Psoas muscle (tissue), 8 donors: ENCODE measurements at regions of chr2 and their contacts with region 1.

Region 1: DNA sequence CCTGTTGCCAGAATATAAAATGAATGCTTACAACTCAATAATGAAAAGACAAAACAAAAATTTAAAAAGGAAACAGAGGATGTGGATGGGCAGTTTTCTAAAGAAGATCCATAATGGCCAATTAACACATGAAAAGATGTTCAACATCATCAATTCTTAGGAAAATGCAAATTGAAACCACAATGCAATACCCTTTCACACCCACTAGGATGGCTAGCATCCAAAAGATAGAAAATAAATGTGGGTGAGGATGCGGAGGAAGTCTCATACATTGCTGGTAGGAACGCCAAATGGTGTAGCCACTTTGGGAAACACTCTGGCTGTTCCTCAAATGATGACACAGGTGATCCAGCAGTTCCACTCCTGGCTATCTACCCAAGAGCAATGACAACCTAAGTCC is 130.5 kb downstream of the TNS1 start:
- DNase-seq: no peak
- ATAC-seq: no peak
- H3K4me3 ChIP-seq: no peak overlapping the region
- H3K27ac ChIP-seq: peak overlapping the region; percentile 75
- H3K4me1 ChIP-seq: peaks cover 46% of the 10 kb centered on the region
- H3K27me3 ChIP-seq: no peaks in the 10 kb centered on the region
- CTCF ChIP-seq: no peak

Region 2: DNA sequence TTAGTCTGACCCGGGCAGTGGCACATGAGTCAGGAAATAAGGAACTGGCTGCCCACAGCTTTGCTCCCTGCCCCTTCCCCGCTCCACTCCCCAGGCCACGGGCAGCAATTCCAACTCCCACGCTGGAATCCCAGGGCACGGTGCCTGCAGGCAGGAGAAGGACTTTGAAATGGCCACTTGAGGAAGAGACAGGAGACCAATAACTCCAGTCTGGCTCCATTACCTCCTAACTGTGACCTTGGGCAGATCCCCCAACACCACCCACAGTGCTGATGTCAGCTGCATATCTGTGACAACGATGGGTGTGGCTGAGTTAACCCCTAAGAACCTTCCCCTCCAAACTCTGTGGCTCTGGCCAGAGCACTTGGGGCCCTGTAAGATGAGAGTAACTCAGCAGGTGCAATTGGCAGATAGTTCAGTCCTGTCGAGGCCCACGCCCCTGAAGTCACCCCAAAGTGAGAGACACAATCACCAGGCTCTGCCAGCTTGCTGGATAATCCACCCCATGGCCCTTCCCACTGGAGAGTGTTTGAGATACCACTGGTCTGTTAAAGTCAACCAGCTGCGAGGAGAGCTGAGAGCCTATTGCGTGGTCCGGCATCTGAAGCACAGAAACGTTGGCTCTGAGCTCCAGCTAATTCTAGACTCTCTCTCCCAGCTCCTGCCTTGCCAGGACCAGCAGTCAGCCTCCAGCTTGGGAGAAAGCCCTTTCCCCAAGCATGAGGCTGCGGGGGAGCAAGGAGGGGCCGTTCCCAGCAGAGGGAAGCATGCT is 44.7 kb before region 1 on chr2:
- intact Hi-C with region 1: loop called in 1 of 2 experiments (anchors 2 kb)
- DNase-seq: peak; percentile 70 to 77
- ATAC-seq: peak; percentile 49 to 60 (median 51)
- H3K4me3 ChIP-seq: no peak overlapping the region
- H3K27ac ChIP-seq: peak overlapping the region; percentile 89
- H3K4me1 ChIP-seq: peaks cover 83% of the 10 kb centered on the region
- H3K27me3 ChIP-seq: no peaks in the 10 kb centered on the region
- CTCF ChIP-seq: no peak

Region 3: GRCh38 chr2:217838409-217838831 is 33.9 kb before region 1 on chr2:
- intact Hi-C with region 1: no loop called
- DNase-seq: peak in 1 of 2 donors; percentile 60
- ATAC-seq: no peak
- H3K4me3 ChIP-seq: no peak overlapping the region
- H3K27ac ChIP-seq: peak overlapping the region; percentile 89
- H3K4me1 ChIP-seq: peaks cover 98% of the 10 kb centered on the region
- H3K27me3 ChIP-seq: no peaks in the 10 kb centered on the region
- CTCF ChIP-seq: no peak

Region 4: DNA sequence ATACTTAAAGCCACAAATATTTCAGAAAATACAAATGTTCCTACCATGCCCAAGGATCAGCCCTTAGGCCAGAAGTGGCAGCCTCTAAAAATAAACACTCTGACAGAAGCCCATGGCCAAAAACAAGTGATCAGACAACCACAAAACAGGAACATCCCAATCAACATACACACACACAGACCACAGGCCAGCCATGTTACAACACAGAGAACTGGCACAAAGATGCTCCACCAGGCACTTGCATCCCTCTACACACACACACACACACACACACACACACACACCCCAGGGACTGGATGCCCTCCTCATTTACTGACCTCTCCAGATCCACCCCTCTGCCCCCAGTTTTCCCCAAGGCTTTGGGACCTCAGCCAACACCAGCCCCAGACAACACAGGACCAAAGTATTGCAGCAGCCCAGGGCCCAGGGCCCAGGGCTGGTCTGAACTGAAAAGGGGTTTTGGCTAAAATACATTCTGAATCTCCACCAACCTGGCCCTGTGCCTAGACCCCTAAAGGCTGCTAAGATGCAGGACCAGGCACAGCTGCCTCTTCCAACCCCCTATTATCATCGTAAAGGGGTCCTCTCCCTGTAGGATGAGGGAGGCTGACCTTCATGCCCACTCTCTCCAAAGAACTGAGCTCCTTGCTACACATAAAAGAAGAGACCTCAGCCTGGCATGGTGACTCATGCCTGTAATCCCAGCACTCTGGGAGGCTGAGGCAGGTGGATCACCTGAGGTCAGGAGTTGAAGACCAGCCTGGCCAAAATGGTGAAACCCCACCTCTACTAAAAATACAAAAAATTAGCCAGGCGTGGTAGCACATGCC is 20.9 kb before region 1 on chr2:
- intact Hi-C with region 1: no loop called
- DNase-seq: peak; percentile 63 to 73
- ATAC-seq: peak; percentile 32 to 55 (median 46)
- H3K4me3 ChIP-seq: peak overlapping the region; percentile 66
- H3K27ac ChIP-seq: peak overlapping the region; percentile 89
- H3K4me1 ChIP-seq: peaks cover 96% of the 10 kb centered on the region
- H3K27me3 ChIP-seq: no peaks in the 10 kb centered on the region
- CTCF ChIP-seq: no peak

Region 5: DNA sequence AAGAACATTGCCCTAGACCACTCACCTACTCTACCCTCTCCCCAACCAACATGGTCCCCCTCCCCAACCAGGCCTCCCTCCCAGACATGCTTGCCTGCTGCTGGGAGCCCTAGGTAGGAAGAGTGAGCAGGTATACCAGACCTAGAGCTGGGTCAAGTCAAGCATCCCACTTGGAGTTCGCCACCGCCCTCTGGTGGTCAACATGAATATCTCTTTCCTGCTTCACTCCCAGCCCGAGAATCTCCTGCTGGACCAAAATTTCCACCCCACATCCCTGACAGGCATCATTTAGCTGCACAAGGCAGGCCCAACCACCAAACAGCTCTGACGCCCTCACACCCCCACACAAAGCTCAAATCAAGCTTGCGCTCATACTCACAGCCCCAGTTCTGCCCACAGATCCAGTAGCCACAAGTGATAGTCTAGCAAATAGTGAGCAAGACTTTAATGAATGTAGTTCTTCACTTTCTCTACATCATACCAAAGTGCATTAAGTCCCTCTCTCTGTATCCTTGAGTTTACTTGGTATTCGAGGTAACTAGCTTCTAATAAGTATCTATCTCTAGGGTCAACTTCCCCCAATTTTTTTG is 14.5 kb after region 1 on chr2:
- intact Hi-C with region 1: loop called in 1 of 2 experiments (anchors 2 kb)
- DNase-seq: peak; percentile 82 to 89
- ATAC-seq: peak; percentile 48 to 74 (median 63)
- H3K4me3 ChIP-seq: no peak overlapping the region
- H3K27ac ChIP-seq: no peak overlapping the region
- H3K4me1 ChIP-seq: peaks cover 28% of the 10 kb centered on the region
- H3K27me3 ChIP-seq: no peaks in the 10 kb centered on the region
- CTCF ChIP-seq: peak; percentile 85